ENCODE measurements at regions of chr17 and their contacts with region 1.

Region 1: GRCh38 chr17:1724506-1725362 is at the start of gene WDR81:
- DNase-seq: peak; percentile 97
- total RNA-seq, gene WDR81: 7.2 TPM

Region 2: GRCh38 chr17:1714427-1714979 is 10.2 kb before region 1 on chr17:
- intact Hi-C with region 1: no loop called
- DNase-seq: peak; percentile 98

Region 3: GRCh38 chr17:1764284-1764683 is 39.5 kb after region 1 on chr17:
- intact Hi-C with region 1: loop called (anchors 5 kb)
- DNase-seq: no peak

Region 4: GRCh38 chr17:1783834-1784611 is 59.3 kb after region 1 on chr17:
- intact Hi-C with region 1: loop called (anchors 2 kb)
- DNase-seq: peak; percentile 83

Region 5: GRCh38 chr17:1865252-1866037 is 140.7 kb after region 1 on chr17:
- intact Hi-C with region 1: loop called (anchors 5 kb)
- DNase-seq: no peak

Region 6: GRCh38 chr17:2041561-2042366 is 317.0 kb after region 1 on chr17 and contains the start of gene OVCA2:
- intact Hi-C with region 1: loop called (anchors 5 kb)
- DNase-seq: peak; percentile 97
- total RNA-seq, gene OVCA2: 19.8 TPM

Measured in cardiac septum (tissue), 1 donor.